Right cardiac atrium (tissue), 5 donors: ENCODE measurements at regions of chr2 and their contacts with region 1.

Region 1: DNA sequence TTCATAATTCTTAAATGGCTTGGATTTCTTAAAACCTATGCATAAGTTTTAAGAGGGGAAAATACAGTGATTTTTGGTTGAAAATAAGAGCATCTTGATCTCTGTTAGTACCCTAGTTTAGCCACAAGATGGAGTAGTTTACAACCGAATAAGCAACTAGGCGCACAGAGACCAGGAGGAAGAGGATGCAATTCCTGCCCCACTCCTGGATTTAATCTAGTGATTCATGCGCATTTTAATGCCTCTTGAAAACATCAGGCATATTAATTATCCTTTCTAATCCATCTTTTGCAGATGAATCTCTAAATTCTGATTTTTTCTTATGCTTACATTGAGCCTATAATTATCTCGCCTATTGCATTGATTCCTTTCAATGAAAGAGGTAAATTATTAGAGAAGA is 76.7 kb downstream of the MRPS9 start:
- DNase-seq: no peak
- ATAC-seq: peak in 1 of 2 donors; percentile 62
- H3K4me3 ChIP-seq: no peak overlapping the region
- H3K27ac ChIP-seq: no peak overlapping the region
- H3K4me1 ChIP-seq: no peaks in the 10 kb centered on the region
- H3K27me3 ChIP-seq: no peaks in the 10 kb centered on the region

Region 2: GRCh38 chr2:105176429-105176828 is 61.9 kb after region 1 on chr2:
- intact Hi-C with region 1: no loop called
- DNase-seq: no peak
- ATAC-seq: no peak
- H3K4me3 ChIP-seq: no peak overlapping the region
- H3K27ac ChIP-seq: no peak overlapping the region
- H3K4me1 ChIP-seq: no peaks in the 10 kb centered on the region
- H3K27me3 ChIP-seq: no peaks in the 10 kb centered on the region

Region 3: DNA sequence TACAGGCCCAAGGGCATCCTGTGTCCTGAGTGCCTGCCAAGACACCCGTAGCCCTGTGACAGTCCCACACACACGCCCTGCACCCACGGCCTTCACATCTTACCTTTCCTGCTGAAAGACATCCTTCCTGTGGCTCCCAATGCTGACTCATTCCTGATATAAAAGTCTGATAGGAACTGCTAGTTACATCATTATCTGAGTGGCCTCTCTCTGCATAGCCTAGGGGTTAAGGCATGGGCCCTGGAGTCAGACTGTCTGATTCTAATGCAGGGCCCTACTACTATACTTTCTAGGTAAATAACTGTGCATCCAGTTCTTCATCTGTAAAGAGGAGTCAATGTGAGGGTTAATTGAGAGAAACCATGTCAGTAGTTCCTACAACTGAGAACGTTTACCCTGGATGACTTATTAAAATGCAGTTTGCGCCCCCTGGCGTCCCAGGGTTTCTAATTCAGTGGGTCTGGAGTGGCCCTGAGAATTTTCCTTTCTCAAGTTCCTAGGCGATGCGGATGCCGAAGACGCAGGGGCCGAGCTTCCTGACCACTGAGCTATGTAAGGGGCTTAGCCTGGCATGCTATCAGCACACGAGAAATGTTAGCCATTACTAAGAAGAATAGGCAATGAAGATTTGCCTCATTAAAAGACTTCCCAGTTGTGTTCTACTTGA is 121.0 kb after region 1 on chr2:
- intact Hi-C with region 1: loop called (anchors 2 to 5 kb)
- DNase-seq: peak; percentile 80 to 93 (median 81)
- ATAC-seq: peak; percentile 64 to 71
- H3K4me3 ChIP-seq: no peak overlapping the region
- H3K27ac ChIP-seq: no peak overlapping the region
- H3K4me1 ChIP-seq: no peaks in the 10 kb centered on the region
- H3K27me3 ChIP-seq: no peaks in the 10 kb centered on the region